A673 (cell line): ENCODE measurements at regions of chr17 and their contacts with region 1.

Region 1: GRCh38 chr17:39244600-39245570 is 19.1 kb upstream of the STAC2 start:
- DNase-seq: peak; percentile 80
- H3K4me3 ChIP-seq: no peak overlapping the region
- H3K27ac ChIP-seq: no peak overlapping the region
- H3K4me1 ChIP-seq: peaks cover 10% of the 10 kb centered on the region
- H3K27me3 ChIP-seq: no peaks in the 10 kb centered on the region
- CTCF ChIP-seq: peak; percentile 77

Region 2: GRCh38 chr17:38982858-38983746 is 261.8 kb before region 1 on chr17:
- CTCF ChIA-PET with region 1: interaction called, 10 read pairs
- POLR2A ChIA-PET with region 1: interaction called, 4 read pairs
- intact Hi-C with region 1: loop called (anchors 5 kb)
- DNase-seq: peak; percentile 71
- H3K4me3 ChIP-seq: no peak overlapping the region
- H3K27ac ChIP-seq: no peak overlapping the region
- H3K4me1 ChIP-seq: no peaks in the 10 kb centered on the region
- H3K27me3 ChIP-seq: no peaks in the 10 kb centered on the region
- CTCF ChIP-seq: peak; percentile 67

Region 3: DNA sequence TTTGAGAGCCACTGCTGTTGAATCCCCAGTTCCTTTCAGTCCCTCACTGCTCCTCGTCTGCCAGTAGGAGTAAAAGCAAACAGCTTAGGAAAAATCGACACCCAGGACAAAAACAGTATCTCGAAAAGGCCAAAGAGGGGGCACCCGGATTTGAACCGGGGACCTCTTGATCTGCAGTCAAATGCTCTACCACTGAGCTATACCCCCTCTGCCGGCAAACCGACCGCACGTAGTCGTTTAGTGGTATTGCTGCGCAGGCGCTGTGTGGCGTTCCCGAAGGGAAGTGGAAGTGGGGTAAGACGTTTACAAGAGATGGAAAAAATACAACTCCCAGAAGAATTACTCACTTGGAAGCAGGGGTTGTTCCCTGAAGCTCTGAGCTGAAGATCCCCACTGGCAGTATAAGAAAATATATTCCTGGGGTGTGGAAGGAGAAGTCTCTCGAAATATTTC is 91.3 kb before region 1 on chr17:
- CTCF ChIA-PET with region 1: interaction called, 6 read pairs
- POLR2A ChIA-PET with region 1: no interaction called
- intact Hi-C with region 1: loop called (anchors 5 kb)
- DNase-seq: peak; percentile 85
- H3K4me3 ChIP-seq: peak overlapping the region; percentile 87
- H3K27ac ChIP-seq: peak overlapping the region; percentile 74
- H3K4me1 ChIP-seq: no peaks in the 10 kb centered on the region
- H3K27me3 ChIP-seq: no peaks in the 10 kb centered on the region
- CTCF ChIP-seq: no peak

Region 4: DNA sequence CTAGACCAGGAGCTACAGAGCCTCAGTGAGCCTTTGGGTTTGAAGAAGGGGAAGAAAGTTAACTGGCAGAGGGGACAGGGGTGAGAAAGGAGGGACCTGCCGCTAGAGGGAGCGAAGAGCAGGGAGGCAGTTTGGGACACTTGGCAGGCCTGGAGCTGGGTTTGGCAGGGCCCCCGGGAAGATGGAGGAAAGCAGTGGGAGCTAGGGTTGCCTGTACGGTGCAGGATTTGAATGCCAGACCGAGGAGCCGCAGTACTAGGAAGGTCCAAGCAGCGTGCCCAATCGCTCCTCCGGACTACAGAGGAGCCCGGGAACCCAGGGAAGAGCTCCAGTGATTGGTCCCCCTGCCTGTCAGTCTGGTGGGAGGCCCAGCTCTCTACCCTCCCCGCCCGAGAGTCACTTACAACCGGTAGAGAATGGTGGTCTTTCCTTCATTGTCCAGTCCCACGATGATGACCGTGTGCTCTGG is 80.2 kb before region 1 on chr17:
- CTCF ChIA-PET with region 1: interaction called, 10 read pairs
- POLR2A ChIA-PET with region 1: no interaction called
- intact Hi-C with region 1: no loop called
- DNase-seq: peak; percentile 82
- H3K4me3 ChIP-seq: peak overlapping the region; percentile 47
- H3K27ac ChIP-seq: no peak overlapping the region
- H3K4me1 ChIP-seq: no peaks in the 10 kb centered on the region
- H3K27me3 ChIP-seq: no peaks in the 10 kb centered on the region
- CTCF ChIP-seq: peak; percentile 71

Region 5: GRCh38 chr17:39209317-39210092 is 35.4 kb before region 1 on chr17:
- CTCF ChIA-PET with region 1: interaction called, 40 read pairs
- POLR2A ChIA-PET with region 1: interaction called, 6 read pairs
- intact Hi-C with region 1: loop called (anchors 1 kb)
- DNase-seq: peak; percentile 71
- H3K4me3 ChIP-seq: peak overlapping the region; percentile 32
- H3K27ac ChIP-seq: peak overlapping the region; percentile 82
- H3K4me1 ChIP-seq: peaks cover 22% of the 10 kb centered on the region
- H3K27me3 ChIP-seq: no peaks in the 10 kb centered on the region
- CTCF ChIP-seq: no peak

Region 6: GRCh38 chr17:39461113-39461925 is 216.4 kb after region 1 on chr17 and contains the start of gene CDK12:
- CTCF ChIA-PET with region 1: no interaction called
- POLR2A ChIA-PET with region 1: no interaction called
- intact Hi-C with region 1: no loop called
- DNase-seq: peak; percentile 96
- H3K4me3 ChIP-seq: peak within 1 kb of the TSS; percentile 75
- H3K27ac ChIP-seq: peak within 1 kb of the TSS; percentile 94
- H3K4me1 ChIP-seq: no peaks in the 10 kb centered on the region
- H3K27me3 ChIP-seq: no peaks in the 10 kb centered on the region
- CTCF ChIP-seq: no peak
- total RNA-seq, gene CDK12: 43.5 TPM in 2 replicates